CD4-positive, alpha-beta T cell (primary cell): ENCODE measurements at regions of chr6 and their contacts with region 1.

Region 1: GRCh38 chr6:158853072-158853871 is 34.1 kb upstream of the EZR start:
- DNase-seq: peak; percentile 73 to 97 (median 86)
- ATAC-seq: peak; percentile 70
- H3K4me3 ChIP-seq: peak overlapping the region; percentile 53
- H3K4me3 Mint-ChIP-seq: no peak overlapping the region
- H3K27ac ChIP-seq: peak overlapping the region; percentile 86 to 97
- H3K27ac Mint-ChIP-seq: no peak overlapping the region
- H3K4me1 ChIP-seq: peaks cover 67% of the 10 kb centered on the region
- H3K4me1 Mint-ChIP-seq: peaks cover 27% of the 10 kb centered on the region
- H3K27me3 ChIP-seq: no peaks in the 10 kb centered on the region
- H3K27me3 Mint-ChIP-seq: no peaks in the 10 kb centered on the region
- CTCF ChIP-seq: no peak

Region 2: DNA sequence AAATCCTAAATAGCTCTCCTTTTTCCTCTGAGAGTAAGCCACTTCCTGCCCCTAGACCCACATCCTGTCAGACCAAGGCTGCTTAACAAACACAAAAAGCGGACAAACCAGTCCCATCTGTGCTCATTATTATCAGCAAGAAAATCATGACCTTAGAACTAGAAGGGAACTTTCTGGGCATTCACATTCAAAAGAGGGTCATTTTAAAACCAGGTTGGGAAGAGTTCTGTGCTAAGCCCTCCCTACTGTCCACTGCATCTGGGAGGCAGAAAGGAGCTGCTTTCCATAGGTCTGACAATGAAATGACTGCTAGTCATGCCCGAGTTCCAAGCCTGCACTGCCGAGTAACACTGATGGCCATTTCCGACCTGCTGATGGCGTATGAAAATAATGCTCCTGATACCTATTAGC is 49.5 kb before region 1 on chr6:
- CTCF ChIA-PET with region 1: no interaction called
- POLR2A ChIA-PET with region 1: interaction called, 14 read pairs
- intact Hi-C with region 1: no loop called
- DNase-seq: peak in 7 of 14 experiments; percentile 29 to 90 (median 45)
- ATAC-seq: peak; percentile 60
- H3K4me3 ChIP-seq: peak overlapping the region; percentile 45
- H3K4me3 Mint-ChIP-seq: peak overlapping the region; percentile 77
- H3K27ac ChIP-seq: peak overlapping the region; percentile 21 to 82
- H3K27ac Mint-ChIP-seq: peak overlapping the region; percentile 75
- H3K4me1 ChIP-seq: peaks cover 80% of the 10 kb centered on the region
- H3K4me1 Mint-ChIP-seq: peaks cover 100% of the 10 kb centered on the region
- H3K27me3 ChIP-seq: no peaks in the 10 kb centered on the region
- H3K27me3 Mint-ChIP-seq: no peaks in the 10 kb centered on the region
- CTCF ChIP-seq: no peak

Region 3: GRCh38 chr6:158863646-158864045 is 10.4 kb after region 1 on chr6:
- CTCF ChIA-PET with region 1: interaction called, 16 read pairs
- POLR2A ChIA-PET with region 1: interaction called, 214 read pairs
- intact Hi-C with region 1: loop called in 1 of 2 experiments (anchors 1 kb)
- DNase-seq: no peak
- ATAC-seq: no peak
- H3K4me3 ChIP-seq: no peak overlapping the region
- H3K4me3 Mint-ChIP-seq: no peak overlapping the region
- H3K27ac ChIP-seq: no peak overlapping the region
- H3K27ac Mint-ChIP-seq: no peak overlapping the region
- H3K4me1 ChIP-seq: peaks cover under 1% of the 10 kb centered on the region
- H3K4me1 Mint-ChIP-seq: peaks cover 15% of the 10 kb centered on the region
- H3K27me3 ChIP-seq: no peaks in the 10 kb centered on the region
- H3K27me3 Mint-ChIP-seq: no peaks in the 10 kb centered on the region
- CTCF ChIP-seq: no peak